ENCODE measurements at regions of chr2 and their contacts with region 1.

Region 1: DNA sequence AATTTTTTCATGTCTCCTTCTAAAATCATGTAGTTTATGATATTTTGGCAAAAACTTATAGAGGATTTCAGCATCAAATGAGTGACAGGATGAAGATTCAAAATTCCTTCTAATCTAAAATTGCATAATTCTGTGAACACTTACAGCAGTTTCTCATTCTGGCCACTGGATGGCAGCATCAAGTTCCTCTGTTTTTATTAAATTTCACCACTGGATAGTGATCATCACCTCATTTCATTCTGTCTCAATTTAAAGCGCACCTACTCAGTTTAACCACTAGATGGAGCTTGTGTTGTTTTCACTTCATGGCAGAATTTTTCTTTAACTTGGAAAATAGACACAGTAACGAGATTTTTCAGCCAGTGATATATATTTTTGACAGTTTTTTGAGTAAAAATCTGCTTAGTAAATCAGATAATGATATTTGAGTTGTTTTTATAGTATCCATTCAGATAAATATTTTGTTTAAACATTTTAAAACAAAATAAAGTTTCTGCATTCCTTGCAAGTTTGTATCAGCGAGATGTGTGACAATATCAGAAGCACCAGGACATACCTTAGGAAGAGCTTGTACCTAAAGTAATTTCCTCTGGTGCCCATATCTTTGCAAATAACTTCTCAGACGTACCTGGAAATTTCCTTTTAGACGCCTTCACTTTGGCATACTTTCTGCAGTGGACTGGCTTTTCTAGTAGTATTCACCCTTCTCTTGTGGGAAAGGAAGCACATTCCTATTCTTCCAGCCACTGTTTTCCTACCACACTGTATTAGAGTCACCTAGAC is 94.7 kb upstream of the ARHGAP15 start:
- DNase-seq: peak; percentile 68
- ATAC-seq: peak; percentile 90
- H3K4me3 Mint-ChIP-seq: no peak overlapping the region
- H3K27ac Mint-ChIP-seq: no peak overlapping the region
- H3K4me1 Mint-ChIP-seq: peaks cover 9% of the 10 kb centered on the region
- H3K27me3 Mint-ChIP-seq: peaks cover 2% of the 10 kb centered on the region

Region 2: GRCh38 chr2:143217512-143218115 is 183.1 kb after region 1 on chr2:
- CTCF ChIA-PET with region 1: interaction called, 11 read pairs
- POLR2A ChIA-PET with region 1: no interaction called
- intact Hi-C with region 1: loop called (anchors 1 kb)
- DNase-seq: no peak
- ATAC-seq: peak; percentile 36
- H3K4me3 Mint-ChIP-seq: no peak overlapping the region
- H3K27ac Mint-ChIP-seq: peak overlapping the region; percentile 40
- H3K4me1 Mint-ChIP-seq: peaks cover 32% of the 10 kb centered on the region
- H3K27me3 Mint-ChIP-seq: no peaks in the 10 kb centered on the region

Region 3: GRCh38 chr2:143468341-143468888 is 433.9 kb after region 1 on chr2:
- CTCF ChIA-PET with region 1: no interaction called
- POLR2A ChIA-PET with region 1: no interaction called
- intact Hi-C with region 1: loop called in 1 of 2 experiments (anchors 5 kb)
- DNase-seq: no peak
- ATAC-seq: peak; percentile 83
- H3K4me3 Mint-ChIP-seq: no peak overlapping the region
- H3K27ac Mint-ChIP-seq: peak overlapping the region; percentile 52
- H3K4me1 Mint-ChIP-seq: peaks cover 39% of the 10 kb centered on the region
- H3K27me3 Mint-ChIP-seq: no peaks in the 10 kb centered on the region

Measured in activated CD4-positive, alpha-beta T cell treated with anti-CD3 and anti-CD28 coated beads for 36 hours (primary cell).